Activated T-helper 1 cell treated with anti-CD3 and anti-CD28 coated beads, Interleukin-12 subunit alpha, Interleukin-12 subunit beta, Interleukin-2, Interleukin-4 antibody, amounts not matched to agents 30 ng/mL and 10 ng/mL and 1 ng/mL, durations not matched to agents 14 hours and 24 hours and 36 hours (primary cell): ENCODE measurements at regions of chr5 and their contacts with region 1.

Region 1: DNA sequence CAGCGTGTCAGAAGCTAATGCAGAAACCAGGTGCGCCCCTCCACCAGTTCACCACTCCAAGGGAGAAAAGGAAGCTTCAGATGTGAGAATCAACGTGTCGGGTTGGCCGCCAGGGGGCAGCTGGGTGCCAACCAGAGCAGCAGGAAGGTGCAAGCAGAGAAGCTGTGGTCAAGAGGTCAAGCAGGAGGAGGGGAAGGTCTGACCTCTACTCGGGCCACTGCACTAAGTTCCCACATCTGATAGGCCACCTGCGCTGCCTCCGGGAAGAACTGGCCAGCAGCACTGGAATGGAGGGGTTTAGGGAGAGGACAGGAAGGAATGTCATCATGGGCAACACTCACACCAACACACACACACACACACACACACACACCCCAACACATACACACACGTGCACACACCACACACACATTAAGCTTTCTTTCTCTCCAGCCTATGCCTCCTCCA is 31.4 kb downstream of the ANXA6 start:
- DNase-seq: peak; percentile 38
- H3K4me3 Mint-ChIP-seq: no peak overlapping the region
- H3K27ac Mint-ChIP-seq: peak overlapping the region; percentile 42
- H3K4me1 Mint-ChIP-seq: peaks cover 43% of the 10 kb centered on the region
- H3K27me3 Mint-ChIP-seq: no peaks in the 10 kb centered on the region

Region 2: DNA sequence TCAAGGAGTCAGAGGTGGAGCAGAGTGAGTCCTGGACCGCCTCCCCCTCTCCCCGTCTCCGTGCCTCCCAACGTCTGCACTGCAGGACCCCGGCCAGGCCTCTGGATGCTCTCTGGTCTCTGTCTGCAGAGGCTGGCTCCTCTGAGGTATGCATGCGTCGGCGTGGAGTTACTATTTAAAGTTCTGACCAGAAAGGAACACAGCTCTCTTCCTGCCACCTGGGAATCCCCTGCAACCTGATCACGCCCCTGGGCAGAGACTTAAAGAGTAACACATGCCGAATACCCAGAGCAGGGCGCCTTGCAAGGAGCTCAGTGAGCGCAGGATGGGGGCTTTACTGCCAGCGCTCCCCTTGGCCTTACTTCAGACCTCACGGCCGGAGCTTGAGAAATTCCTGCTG is 15.3 kb after region 1 on chr5:
- intact Hi-C with region 1: loop called (anchors 1 kb)
- DNase-seq: peak; percentile 64
- H3K4me3 Mint-ChIP-seq: peak overlapping the region; percentile 80
- H3K27ac Mint-ChIP-seq: peak overlapping the region; percentile 73
- H3K4me1 Mint-ChIP-seq: peaks cover 88% of the 10 kb centered on the region
- H3K27me3 Mint-ChIP-seq: no peaks in the 10 kb centered on the region

Region 3: DNA sequence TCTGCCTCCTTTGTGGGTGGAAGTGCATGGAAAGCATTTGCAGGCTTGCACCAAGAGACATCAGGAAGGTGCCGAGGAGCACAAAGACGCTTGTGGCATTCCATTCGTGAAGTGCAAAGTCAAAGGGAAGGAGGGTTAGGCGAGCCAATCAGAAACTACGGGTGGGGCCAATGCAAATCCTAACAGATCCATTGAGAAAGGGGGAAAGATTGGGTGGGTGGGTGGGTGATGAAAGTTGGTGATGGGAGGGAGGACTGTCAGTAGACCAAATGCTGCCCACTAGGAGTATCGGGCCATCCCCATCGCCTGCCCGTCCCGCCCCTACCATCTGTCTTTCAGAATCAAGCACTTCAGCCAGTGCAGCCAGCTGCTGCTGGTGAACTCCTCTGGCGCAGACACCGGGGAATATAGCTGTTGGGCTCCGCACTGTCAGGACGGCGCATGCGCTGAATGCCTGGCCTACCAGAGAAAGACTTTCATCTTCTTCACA is 48.4 kb after region 1 on chr5:
- intact Hi-C with region 1: no loop called
- DNase-seq: no peak
- H3K4me3 Mint-ChIP-seq: no peak overlapping the region
- H3K27ac Mint-ChIP-seq: no peak overlapping the region
- H3K4me1 Mint-ChIP-seq: peaks cover 7% of the 10 kb centered on the region
- H3K27me3 Mint-ChIP-seq: no peaks in the 10 kb centered on the region

Region 4: DNA sequence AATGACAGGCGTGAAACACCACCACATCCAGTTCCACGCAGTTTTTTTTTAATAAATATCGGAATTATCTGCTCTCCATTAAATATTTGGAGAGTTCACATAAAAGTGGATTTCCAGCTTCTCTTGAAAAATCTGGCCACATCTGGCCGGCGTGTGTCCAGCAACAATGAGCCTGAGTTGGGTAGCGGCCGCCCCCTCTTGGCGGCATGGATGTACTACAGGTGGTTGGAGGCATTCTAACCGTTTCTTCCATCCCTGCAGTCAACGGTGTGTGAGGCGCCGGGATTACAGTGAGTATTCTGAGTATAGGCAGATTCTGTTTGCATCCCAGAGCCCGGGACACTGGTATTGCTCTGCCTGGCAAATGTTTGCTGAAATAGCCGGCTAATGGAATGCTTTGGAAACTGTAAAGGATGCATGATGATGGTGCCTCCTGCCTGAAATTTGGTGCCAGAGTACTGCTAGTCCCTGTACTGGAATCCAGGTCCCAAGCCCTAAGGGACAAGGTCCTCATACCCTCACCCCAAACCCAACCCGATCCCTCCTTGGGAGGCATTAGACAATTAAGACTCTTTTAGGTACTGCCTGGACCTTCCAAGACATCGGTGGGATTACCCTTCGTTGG is 113.1 kb after region 1 on chr5:
- intact Hi-C with region 1: loop called (anchors 1 kb)
- DNase-seq: no peak
- H3K4me3 Mint-ChIP-seq: no peak overlapping the region
- H3K27ac Mint-ChIP-seq: no peak overlapping the region
- H3K4me1 Mint-ChIP-seq: peaks cover 41% of the 10 kb centered on the region
- H3K27me3 Mint-ChIP-seq: no peaks in the 10 kb centered on the region

Region 5: GRCh38 chr5:151298063-151298855 is 172.0 kb after region 1 on chr5:
- intact Hi-C with region 1: loop called (anchors 5 kb)
- DNase-seq: peak; percentile 5
- H3K4me3 Mint-ChIP-seq: no peak overlapping the region
- H3K27ac Mint-ChIP-seq: no peak overlapping the region
- H3K4me1 Mint-ChIP-seq: peaks cover 15% of the 10 kb centered on the region
- H3K27me3 Mint-ChIP-seq: peaks cover 12% of the 10 kb centered on the region

Region 6: DNA sequence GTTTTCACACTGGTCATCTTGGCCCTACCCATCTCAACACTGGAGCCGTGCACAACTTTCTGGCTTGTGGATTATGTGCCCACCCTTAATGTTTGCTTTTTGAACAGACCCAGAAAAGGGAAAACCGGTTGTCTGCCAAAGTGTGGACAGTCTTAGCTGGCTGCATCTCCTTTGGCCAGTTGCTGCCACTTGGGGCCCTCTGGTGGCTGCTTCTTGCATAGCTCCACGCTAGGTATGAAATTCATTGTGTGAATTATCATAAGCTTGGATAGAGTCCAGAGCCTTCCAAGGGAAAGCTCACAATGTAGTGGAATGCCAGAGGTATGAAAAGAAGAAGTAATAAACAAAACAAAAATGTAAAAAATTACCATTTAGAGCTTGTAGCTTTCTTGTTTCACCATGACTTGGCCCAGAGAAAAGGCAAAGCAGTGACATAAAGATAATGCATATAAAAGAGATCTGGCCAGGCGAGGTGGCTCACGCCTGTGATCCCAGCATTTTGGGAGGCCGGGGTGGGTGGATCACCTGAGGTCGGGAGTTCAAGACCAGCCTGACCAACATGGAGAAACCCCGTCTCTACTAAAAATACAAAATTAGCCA is 189.9 kb after region 1 on chr5:
- intact Hi-C with region 1: loop called (anchors 2 kb)
- DNase-seq: peak; percentile 17
- H3K4me3 Mint-ChIP-seq: no peak overlapping the region
- H3K27ac Mint-ChIP-seq: no peak overlapping the region
- H3K4me1 Mint-ChIP-seq: no peaks in the 10 kb centered on the region
- H3K27me3 Mint-ChIP-seq: peaks cover 10% of the 10 kb centered on the region